ENCODE measurements at regions of chr2 and their contacts with region 1.

Region 1: GRCh38 chr2:170554278-170554955 is 160.7 kb upstream of the SP5 start:
- DNase-seq: no peak
- ATAC-seq: no peak
- H3K4me3 ChIP-seq: no peak overlapping the region
- H3K4me3 Mint-ChIP-seq: no peak overlapping the region
- H3K27ac ChIP-seq: no peak overlapping the region
- H3K27ac Mint-ChIP-seq: no peak overlapping the region
- H3K4me1 ChIP-seq: no peaks in the 10 kb centered on the region
- H3K4me1 Mint-ChIP-seq: no peaks in the 10 kb centered on the region
- H3K27me3 ChIP-seq: peaks cover 0 to 2% of the 10 kb centered on the region in 2 experiments
- H3K27me3 Mint-ChIP-seq: peaks cover 7 to 13% of the 10 kb centered on the region in 2 donors

Region 2: GRCh38 chr2:170425281-170425751 is 129.1 kb before region 1 on chr2:
- CTCF ChIA-PET with region 1: no interaction called
- POLR2A ChIA-PET with region 1: interaction called in 1 of 2 experiments, 13 read pairs
- DNase-seq: no peak
- ATAC-seq: no peak
- H3K4me3 ChIP-seq: no peak overlapping the region
- H3K4me3 Mint-ChIP-seq: no peak overlapping the region
- H3K27ac ChIP-seq: no peak overlapping the region
- H3K27ac Mint-ChIP-seq: no peak overlapping the region
- H3K4me1 ChIP-seq: no peaks in the 10 kb centered on the region
- H3K4me1 Mint-ChIP-seq: no peaks in the 10 kb centered on the region
- H3K27me3 ChIP-seq: peaks cover 0 to 7% of the 10 kb centered on the region in 2 experiments
- H3K27me3 Mint-ChIP-seq: peaks cover 12 to 21% of the 10 kb centered on the region in 2 donors

Region 3: DNA sequence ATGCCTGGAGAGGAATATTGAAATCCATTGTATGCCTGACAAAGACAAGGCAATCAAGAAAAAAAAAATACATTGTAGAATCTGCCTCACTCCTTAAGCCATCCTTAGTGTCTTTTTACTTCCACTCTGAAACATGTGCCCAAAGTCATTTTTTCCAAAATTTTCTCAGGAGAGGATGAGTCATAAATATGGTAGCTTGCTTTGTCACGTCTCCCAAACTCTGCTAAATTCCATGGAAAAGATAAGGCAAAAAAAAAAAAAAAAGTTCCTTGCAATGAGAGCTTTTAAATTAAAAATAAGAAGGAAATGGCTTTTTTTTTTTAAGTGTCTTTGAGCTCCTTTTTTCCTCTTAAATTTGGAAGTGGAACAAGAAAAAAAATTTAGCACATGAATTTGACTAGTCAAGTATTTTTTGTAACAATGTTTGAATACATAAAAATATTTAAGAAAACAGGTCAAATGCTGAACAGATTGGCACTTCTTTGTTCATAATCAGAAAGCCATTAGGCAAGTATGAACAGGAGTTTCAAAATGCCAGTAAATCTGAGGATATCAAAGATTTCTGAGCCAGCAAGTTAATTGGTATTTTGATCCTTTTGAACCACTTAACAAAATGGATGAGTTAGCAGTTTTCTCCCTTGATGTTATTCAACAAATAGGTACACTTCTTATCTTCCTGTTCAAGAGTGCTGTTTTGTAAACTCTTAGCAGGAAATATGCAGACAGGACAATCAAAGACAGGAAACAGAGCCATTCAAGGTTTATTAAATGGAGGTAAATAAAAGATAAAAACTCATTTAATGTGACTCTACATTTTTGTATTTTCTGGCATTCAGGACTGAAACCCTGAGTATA is 86.6 kb before region 1 on chr2:
- CTCF ChIA-PET with region 1: no interaction called
- POLR2A ChIA-PET with region 1: interaction called in 1 of 2 experiments, 11 read pairs
- DNase-seq: no peak
- ATAC-seq: no peak
- H3K4me3 ChIP-seq: no peak overlapping the region
- H3K4me3 Mint-ChIP-seq: no peak overlapping the region
- H3K27ac ChIP-seq: no peak overlapping the region
- H3K27ac Mint-ChIP-seq: no peak overlapping the region
- H3K4me1 ChIP-seq: no peaks in the 10 kb centered on the region
- H3K4me1 Mint-ChIP-seq: peaks cover 0 to 2% (median 2%) of the 10 kb centered on the region in 3 donors
- H3K27me3 ChIP-seq: peaks cover 0 to 3% of the 10 kb centered on the region in 2 experiments
- H3K27me3 Mint-ChIP-seq: peaks cover 4% of the 10 kb centered on the region in 2 donors

Region 4: GRCh38 chr2:170567429-170567828 is 13.0 kb after region 1 on chr2:
- CTCF ChIA-PET with region 1: no interaction called
- POLR2A ChIA-PET with region 1: no interaction called
- DNase-seq: no peak
- ATAC-seq: no peak
- H3K4me3 ChIP-seq: no peak overlapping the region
- H3K4me3 Mint-ChIP-seq: no peak overlapping the region
- H3K27ac ChIP-seq: no peak overlapping the region
- H3K27ac Mint-ChIP-seq: no peak overlapping the region
- H3K4me1 ChIP-seq: no peaks in the 10 kb centered on the region
- H3K4me1 Mint-ChIP-seq: no peaks in the 10 kb centered on the region
- H3K27me3 ChIP-seq: peaks cover 0 to 4% of the 10 kb centered on the region in 2 experiments
- H3K27me3 Mint-ChIP-seq: peaks cover 13 to 20% of the 10 kb centered on the region in 2 donors